ENCODE measurements at regions of chr10 and their contacts with region 1.

Region 1: DNA sequence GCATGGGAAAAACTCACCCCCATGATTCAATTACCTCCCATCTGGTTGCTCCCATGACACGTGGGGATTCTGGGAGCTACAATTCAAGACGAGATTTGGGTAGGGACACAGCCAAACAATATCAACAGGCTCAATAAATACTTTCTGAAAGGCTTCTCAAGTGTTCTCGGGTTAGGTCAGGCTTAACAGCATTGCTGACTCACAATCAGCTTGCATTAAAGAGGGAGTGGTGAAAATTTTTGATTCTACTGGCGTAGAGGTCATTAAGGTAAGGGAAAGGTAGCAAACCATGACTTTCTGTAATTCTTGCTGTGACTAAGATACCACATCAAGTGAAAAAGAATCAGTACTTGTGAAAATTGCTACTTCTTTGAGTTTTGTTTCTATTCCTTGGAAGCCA is 126.4 kb downstream of the JCAD start:
- DNase-seq: peak in 1 of 2 donors; percentile 3
- H3K4me3 ChIP-seq: no peak overlapping the region
- CTCF ChIP-seq: no peak
- POLR2A ChIP-seq: no peak

Region 2: DNA sequence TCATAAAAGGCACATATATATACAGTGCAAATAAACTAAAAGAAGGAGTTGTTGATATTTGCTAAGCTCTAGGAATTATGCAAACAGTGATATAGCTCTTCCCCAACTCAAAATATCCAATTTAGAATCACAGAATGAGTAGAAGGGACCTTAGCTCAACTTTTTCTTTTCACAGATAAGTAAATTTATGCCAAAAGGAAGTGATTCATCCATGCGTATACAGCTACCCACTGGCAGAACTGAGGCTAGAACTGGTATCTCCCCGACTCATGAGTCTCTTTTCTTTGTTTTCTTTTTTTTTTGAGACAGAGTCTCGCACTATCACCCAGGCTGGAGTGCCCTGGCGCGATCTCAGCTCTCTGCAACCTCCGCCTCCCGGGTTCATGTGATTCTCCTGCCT is 244.0 kb before region 1 on chr10:
- intact Hi-C with region 1: no loop called
- DNase-seq: no peak
- H3K4me3 ChIP-seq: no peak overlapping the region
- CTCF ChIP-seq: no peak
- POLR2A ChIP-seq: no peak

Region 3: GRCh38 chr10:29877793-29878491 is 55.0 kb before region 1 on chr10:
- intact Hi-C with region 1: loop called (anchors 10 kb)
- DNase-seq: no peak
- H3K4me3 ChIP-seq: no peak overlapping the region
- CTCF ChIP-seq: no peak
- POLR2A ChIP-seq: no peak